Left ventricle myocardium superior (tissue), 1 donor: ENCODE measurements at regions of chr20 and their contacts with region 1.

Region 1: DNA sequence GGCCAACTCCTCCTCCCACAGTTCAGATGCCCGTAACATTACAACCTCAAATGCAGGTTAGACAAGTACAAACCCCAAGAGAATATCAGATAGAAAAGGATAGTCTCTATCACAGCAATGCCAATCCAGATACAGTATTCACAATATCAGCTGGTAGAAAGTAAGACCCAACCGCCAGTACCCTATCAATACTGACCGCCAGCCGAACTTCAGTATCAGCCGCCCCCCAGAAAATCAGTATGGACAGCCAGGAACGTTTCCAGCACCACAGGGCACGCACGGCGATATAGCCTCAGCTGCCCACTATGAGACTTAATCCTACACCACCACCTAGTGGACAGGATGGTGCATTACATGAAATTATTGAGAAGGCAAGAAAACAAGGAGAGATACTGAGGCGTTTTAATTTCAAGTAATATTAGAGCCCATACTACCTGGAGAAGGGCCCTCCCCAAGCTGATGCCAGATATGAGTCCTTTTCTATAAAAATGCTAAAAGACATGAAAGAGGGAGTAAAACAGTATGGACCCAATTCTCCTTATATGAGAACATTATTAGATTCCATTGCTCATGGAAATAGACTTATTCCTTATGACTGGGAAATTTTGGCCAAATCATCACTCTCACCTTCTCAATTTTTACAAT is 17.6 kb upstream of the EIF2S2 start:
- DNase-seq: peak; percentile 61
- ATAC-seq: peak; percentile 83

Region 2: DNA sequence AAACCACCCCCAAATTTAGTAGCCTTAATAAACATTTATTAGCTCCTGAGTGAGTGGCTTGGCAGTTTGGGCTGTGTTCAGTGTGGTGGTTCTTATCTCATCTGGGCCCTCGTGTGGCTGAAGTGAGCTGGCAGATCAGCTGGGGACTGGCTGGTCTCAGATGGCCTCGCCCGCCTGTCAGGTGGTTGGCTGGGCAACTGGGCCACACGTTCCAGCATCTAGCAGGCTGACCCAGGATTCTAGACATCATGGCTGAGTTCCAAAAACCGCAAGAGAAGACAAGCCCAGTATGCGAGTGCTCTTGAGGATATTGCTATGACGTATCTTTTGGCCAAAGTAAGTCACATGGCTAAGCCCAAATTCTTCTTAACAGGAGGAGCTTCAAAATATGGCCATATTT is 46.5 kb before region 1 on chr20:
- intact Hi-C with region 1: loop called (anchors 5 kb)
- DNase-seq: peak; percentile 87
- ATAC-seq: peak; percentile 94

Region 3: GRCh38 chr20:34190679-34191090 is 61.0 kb after region 1 on chr20:
- intact Hi-C with region 1: no loop called
- DNase-seq: peak; percentile 71
- ATAC-seq: peak; percentile 96